PC-9 (cell line): ENCODE measurements at regions of chr17 and their contacts with region 1.

Region 1: DNA sequence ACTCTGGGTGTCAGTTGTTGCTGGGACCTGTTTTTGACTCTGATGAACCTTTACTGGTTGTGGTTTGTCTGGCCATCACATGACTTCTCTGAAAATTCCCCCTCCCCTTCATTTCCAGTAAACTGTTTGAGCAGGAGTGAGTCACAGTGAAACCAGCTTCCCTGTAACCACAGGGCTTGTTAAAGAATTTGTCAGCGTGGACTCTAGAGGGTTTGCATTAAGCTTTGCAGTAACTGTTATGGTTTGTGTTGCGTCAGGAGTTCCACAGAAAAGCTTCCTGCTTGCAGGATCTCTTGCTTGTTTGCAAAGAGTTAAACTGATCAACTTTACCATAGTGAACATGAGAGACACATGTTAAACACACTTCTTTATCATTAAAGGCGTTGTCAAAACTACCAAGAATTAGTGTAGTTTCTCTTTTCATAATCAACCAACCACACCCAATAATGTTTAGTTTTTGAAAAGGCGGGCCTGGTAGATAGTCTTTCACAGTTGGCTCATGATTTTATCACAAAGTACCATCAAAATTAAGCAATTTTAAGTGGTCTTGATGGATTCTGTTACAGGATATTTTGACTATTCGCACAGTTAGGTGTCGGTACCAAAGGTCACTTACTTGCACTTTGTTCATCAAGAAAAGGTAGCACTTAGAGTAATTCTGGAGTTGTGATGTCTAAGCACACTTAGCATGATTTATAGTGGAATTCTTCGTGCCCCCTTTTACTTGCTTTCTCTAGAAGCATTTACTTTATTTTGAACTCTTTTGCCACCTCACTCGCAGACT is 79.3 kb downstream of the VMP1 start:
- DNase-seq: peak; percentile 76 to 100
- H3K4me3 ChIP-seq: peak overlapping the region; percentile 47
- H3K27ac ChIP-seq: peak overlapping the region; percentile 98
- H3K4me1 ChIP-seq: peaks cover 76% of the 10 kb centered on the region
- H3K27me3 ChIP-seq: no peaks in the 10 kb centered on the region
- CTCF ChIP-seq: no peak

Region 2: DNA sequence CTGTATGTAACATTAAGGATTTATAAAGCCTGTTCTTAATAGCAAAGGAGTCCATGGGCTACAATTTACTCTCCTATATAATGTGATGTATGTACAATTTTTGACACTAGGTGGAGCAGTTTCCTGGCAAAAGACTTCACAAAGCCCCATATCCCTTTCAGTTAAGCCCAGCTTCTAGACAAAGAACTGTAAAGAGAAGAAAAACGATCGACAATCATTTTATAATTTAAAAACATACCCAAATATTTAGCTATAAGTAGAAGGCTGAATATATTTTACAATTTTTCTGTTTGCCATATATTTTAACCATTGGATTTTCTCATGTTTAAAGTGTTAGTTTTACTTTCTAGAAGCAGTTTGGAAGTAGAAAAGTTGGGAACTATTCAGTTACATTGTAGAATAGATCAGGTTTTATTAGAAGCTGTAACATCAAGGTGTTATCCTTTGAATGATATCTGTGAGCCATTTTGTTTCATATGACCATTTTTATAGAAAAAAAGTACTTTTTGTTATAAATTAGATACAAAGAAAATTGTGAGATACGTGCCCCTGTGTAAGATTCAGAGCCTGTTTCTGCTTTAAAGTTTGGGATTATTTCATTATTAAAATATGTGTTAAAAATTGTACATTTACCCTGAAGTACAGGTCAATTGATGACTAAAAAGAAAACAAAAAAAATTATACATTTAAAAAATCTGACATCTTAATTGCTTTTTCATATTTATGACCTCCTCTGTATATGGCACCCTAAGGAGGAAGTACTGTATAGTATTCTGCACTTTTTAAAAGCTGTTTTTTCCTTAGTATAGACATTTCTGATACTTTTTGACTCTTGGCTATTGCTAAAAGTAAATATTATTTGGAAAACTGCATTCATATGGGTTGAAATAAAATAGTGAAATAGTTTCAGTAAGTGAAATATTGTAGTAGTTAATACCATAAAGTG is 32.9 kb before region 1 on chr17:
- CTCF ChIA-PET with region 1: interaction called, 3 read pairs
- POLR2A ChIA-PET with region 1: interaction called, 7 read pairs
- intact Hi-C with region 1: loop called (anchors 1 kb)
- DNase-seq: peak in 1 of 2 experiments; percentile 79
- H3K4me3 ChIP-seq: peak overlapping the region; percentile 45
- H3K27ac ChIP-seq: peak overlapping the region; percentile 99
- H3K4me1 ChIP-seq: peaks cover 59% of the 10 kb centered on the region
- H3K27me3 ChIP-seq: no peaks in the 10 kb centered on the region
- CTCF ChIP-seq: peak; percentile 93

Region 3: DNA sequence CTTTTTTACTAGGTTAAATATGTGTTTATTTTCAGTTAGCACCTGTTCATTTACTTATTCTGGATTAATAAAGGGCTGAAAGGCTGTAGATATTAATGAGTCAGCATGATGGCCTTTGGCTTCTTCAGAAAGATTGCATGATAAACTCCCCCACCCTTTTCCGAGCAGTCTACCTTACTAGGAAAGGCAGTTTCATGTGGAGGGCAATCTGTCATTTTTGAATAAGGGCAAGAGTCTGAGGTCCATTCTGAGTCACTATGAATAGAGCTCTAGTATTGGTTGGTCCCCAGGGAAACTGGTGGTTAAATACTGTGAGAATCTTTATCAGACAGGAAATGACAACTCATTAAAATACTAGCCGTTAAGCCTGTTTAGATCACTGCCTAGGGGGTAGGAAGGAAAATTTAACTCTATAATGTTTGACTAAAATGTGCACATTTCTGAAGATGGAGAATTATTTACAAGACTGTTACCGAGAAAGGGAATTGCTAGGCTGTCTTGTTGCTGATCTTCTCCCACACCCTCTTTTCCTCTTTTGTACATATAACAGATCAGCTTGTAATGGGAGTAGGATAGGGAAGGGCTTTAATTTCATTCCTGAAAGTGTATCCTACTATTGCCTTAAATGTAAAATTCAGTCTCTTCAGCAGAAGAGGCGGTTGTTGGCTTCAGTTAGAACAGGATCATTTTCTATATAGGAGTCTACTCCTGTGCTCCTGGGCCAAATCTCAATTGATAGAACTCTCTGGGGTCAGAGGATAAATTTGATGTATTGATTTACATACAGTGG is 42.7 kb after region 1 on chr17:
- CTCF ChIA-PET with region 1: interaction called, 3 read pairs
- POLR2A ChIA-PET with region 1: interaction called, 34 read pairs
- intact Hi-C with region 1: loop called (anchors 1 kb)
- DNase-seq: peak; percentile 66 to 100
- H3K4me3 ChIP-seq: peak overlapping the region; percentile 51
- H3K27ac ChIP-seq: peak overlapping the region; percentile 99
- H3K4me1 ChIP-seq: peaks cover 90% of the 10 kb centered on the region
- H3K27me3 ChIP-seq: no peaks in the 10 kb centered on the region
- CTCF ChIP-seq: no peak

Region 4: GRCh38 chr17:59846394-59847165 is 59.9 kb after region 1 on chr17:
- CTCF ChIA-PET with region 1: no interaction called
- POLR2A ChIA-PET with region 1: interaction called, 37 read pairs
- intact Hi-C with region 1: loop called (anchors 2 kb)
- DNase-seq: peak; percentile 75 to 100
- H3K4me3 ChIP-seq: peak overlapping the region; percentile 46; the same call in 1 of the 2 replicates
- H3K27ac ChIP-seq: peak overlapping the region; percentile 99
- H3K4me1 ChIP-seq: peaks cover 76% of the 10 kb centered on the region
- H3K27me3 ChIP-seq: no peaks in the 10 kb centered on the region
- CTCF ChIP-seq: no peak

Region 5: GRCh38 chr17:60579090-60579489 is 792.4 kb after region 1 on chr17:
- CTCF ChIA-PET with region 1: no interaction called
- POLR2A ChIA-PET with region 1: interaction called, 27 read pairs
- intact Hi-C with region 1: no loop called
- DNase-seq: no peak
- H3K4me3 ChIP-seq: no peak overlapping the region
- H3K27ac ChIP-seq: no peak overlapping the region
- H3K4me1 ChIP-seq: peaks cover 9% of the 10 kb centered on the region; the same call in 1 of the 2 replicates
- H3K27me3 ChIP-seq: no peaks in the 10 kb centered on the region
- CTCF ChIP-seq: no peak